K562 (cell line): ENCODE measurements at regions of chrX and their contacts with region 1.

Region 1: GRCh38 chrX:49915361-49916222 is 6.8 kb upstream of the CLCN5 start:
- DNase-seq: peak; percentile 38 to 64 (median 48)
- ATAC-seq: peak; percentile 91
- H3K4me3 ChIP-seq: no peak overlapping the region
- H3K27ac ChIP-seq: no peak overlapping the region
- H3K4me1 ChIP-seq: no peaks in the 10 kb centered on the region; a peak in 1 of 5 replicates
- H3K27me3 ChIP-seq: peaks cover 0 to 7% of the 10 kb centered on the region in 2 experiments; a peak in 1 of 5 replicates
- CTCF ChIP-seq: peak; percentile 68 to 84 (median 69)
- EP300 ChIP-seq: no peak
- POLR2A ChIP-seq: no peak
- RAD21 ChIP-seq: peak; percentile 46 to 75; a peak in 3 of 4 replicates

Region 2: GRCh38 chrX:49761481-49761880 is 154.1 kb before region 1 on chrX:
- CTCF ChIA-PET with region 1: interaction called, 3 read pairs
- POLR2A ChIA-PET with region 1: no interaction called
- in situ Hi-C with region 1: no loop called
- intact Hi-C with region 1: loop called (anchors 5 kb)
- DNase-seq: peak; percentile 20 to 32 (median 26)
- ATAC-seq: peak; percentile 74
- H3K4me3 ChIP-seq: no peak overlapping the region
- H3K27ac ChIP-seq: no peak overlapping the region
- H3K4me1 ChIP-seq: no peaks in the 10 kb centered on the region
- H3K27me3 ChIP-seq: no peaks in the 10 kb centered on the region
- CTCF ChIP-seq: peak; percentile 49 to 65 (median 56); a peak in 5 of 6 replicates
- EP300 ChIP-seq: no peak
- POLR2A ChIP-seq: no peak
- RAD21 ChIP-seq: peak; percentile 25 to 56; a peak in 3 of 4 replicates

Region 3: GRCh38 chrX:49884290-49884862 is 31.2 kb before region 1 on chrX:
- CTCF ChIA-PET with region 1: no interaction called
- POLR2A ChIA-PET with region 1: no interaction called
- in situ Hi-C with region 1: no loop called
- intact Hi-C with region 1: loop called (anchors 2 kb)
- DNase-seq: peak; percentile 39 to 67 (median 40)
- ATAC-seq: peak; percentile 72
- H3K4me3 ChIP-seq: no peak overlapping the region
- H3K27ac ChIP-seq: no peak overlapping the region
- H3K4me1 ChIP-seq: peaks cover 0 to 3% of the 10 kb centered on the region in 2 experiments; a peak in 3 of 5 replicates
- H3K27me3 ChIP-seq: peaks cover 0 to 7% of the 10 kb centered on the region in 2 experiments; a peak in 1 of 5 replicates
- CTCF ChIP-seq: peak; percentile 76 to 89 (median 77)
- EP300 ChIP-seq: no peak
- POLR2A ChIP-seq: no peak
- RAD21 ChIP-seq: peak; percentile 15 to 54; a peak in 2 of 4 replicates

Region 4: DNA sequence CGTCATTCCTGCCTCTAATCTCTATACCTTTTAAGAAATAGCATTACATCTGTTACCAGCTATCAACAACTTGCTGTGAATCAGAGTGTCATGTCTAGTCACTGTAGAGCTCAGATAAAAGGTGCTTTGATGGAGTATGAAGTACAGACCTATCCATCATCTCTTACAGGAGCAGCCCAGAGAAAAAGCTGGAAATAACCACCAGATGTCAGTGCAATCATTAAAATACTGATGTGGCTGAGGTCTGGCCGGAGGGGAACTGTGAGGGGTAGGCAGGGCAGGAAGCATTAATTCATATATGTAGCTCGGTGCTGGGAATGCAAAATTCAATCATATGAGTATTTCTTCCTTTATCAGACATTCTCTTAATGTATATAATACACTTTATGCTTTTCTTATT is 184.6 kb after region 1 on chrX:
- CTCF ChIA-PET with region 1: no interaction called
- POLR2A ChIA-PET with region 1: no interaction called
- in situ Hi-C with region 1: loop called (anchors 10 kb)
- intact Hi-C with region 1: no loop called
- DNase-seq: peak; percentile 9 to 41 (median 24)
- ATAC-seq: peak; percentile 88
- H3K4me3 ChIP-seq: no peak overlapping the region
- H3K27ac ChIP-seq: no peak overlapping the region
- H3K4me1 ChIP-seq: no peaks in the 10 kb centered on the region
- H3K27me3 ChIP-seq: no peaks in the 10 kb centered on the region
- CTCF ChIP-seq: peak; percentile 46 to 64 (median 64); a peak in 4 of 6 replicates
- EP300 ChIP-seq: no peak
- POLR2A ChIP-seq: no peak
- RAD21 ChIP-seq: peak; percentile 65 to 68

Region 5: GRCh38 chrX:50448565-50448964 is 533.0 kb after region 1 on chrX:
- CTCF ChIA-PET with region 1: no interaction called
- POLR2A ChIA-PET with region 1: no interaction called
- in situ Hi-C with region 1: no loop called
- intact Hi-C with region 1: loop called (anchors 10 kb)
- DNase-seq: peak; percentile 20 to 32 (median 23)
- ATAC-seq: peak; percentile 78; the same call in 2 of the 3 replicates
- H3K4me3 ChIP-seq: no peak overlapping the region
- H3K27ac ChIP-seq: no peak overlapping the region
- H3K4me1 ChIP-seq: no peaks in the 10 kb centered on the region
- H3K27me3 ChIP-seq: no peaks in the 10 kb centered on the region
- CTCF ChIP-seq: peak; percentile 37 to 49 (median 44); a peak in 4 of 6 replicates
- EP300 ChIP-seq: no peak
- POLR2A ChIP-seq: no peak
- RAD21 ChIP-seq: peak; percentile 10 to 38; a peak in 1 of 4 replicates